ENCODE measurements at regions of chr6 and their contacts with region 1.

Region 1: GRCh38 chr6:46419576-46420002 is 71.7 kb downstream of the RCAN2 start:
- DNase-seq: peak in 1 of 2 donors; percentile 69
- H3K4me3 ChIP-seq: no peak overlapping the region
- CTCF ChIP-seq: no peak
- POLR2A ChIP-seq: no peak

Region 2: DNA sequence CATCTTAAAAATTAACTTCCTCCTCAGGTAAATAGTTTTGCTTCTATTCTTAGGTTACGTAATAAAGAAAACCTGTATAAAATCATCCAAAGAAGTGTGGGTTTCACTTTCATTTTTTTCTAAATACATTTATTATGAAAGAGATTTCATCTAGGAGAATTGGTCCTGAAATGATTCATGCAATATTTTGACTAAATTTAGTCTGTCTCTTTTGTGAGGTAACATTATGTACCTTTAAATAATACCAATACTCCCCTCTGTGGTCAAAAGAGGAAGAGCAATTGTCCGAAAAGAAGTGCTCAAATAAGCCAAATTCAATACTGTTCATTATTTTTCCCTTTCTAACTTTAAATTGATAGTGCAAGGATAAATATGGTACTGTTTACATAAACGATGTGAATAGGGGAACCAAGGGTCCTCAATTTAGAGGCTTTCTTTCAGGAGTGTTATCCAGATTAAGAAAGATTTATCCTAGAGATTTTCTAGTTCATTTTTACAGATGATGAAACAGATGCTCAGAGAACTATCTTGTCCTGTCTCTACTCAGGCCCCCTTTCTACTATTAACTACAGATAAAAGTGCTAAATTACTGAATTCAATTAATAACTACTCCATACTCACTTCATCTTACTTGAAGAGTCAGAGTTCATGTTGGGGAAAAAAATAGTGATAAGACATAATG is 206.8 kb after region 1 on chr6:
- intact Hi-C with region 1: loop called (anchors 10 kb)
- DNase-seq: no peak
- H3K4me3 ChIP-seq: no peak overlapping the region
- CTCF ChIP-seq: no peak
- POLR2A ChIP-seq: no peak

Region 3: GRCh38 chr6:46785874-46786273 is 366.3 kb after region 1 on chr6:
- intact Hi-C with region 1: loop called (anchors 5 kb)
- DNase-seq: no peak
- H3K4me3 ChIP-seq: no peak overlapping the region
- CTCF ChIP-seq: no peak
- POLR2A ChIP-seq: no peak